ENCODE measurements at regions of chr2 and their contacts with region 1.

Region 1: GRCh38 chr2:62456721-62457539 is 49.1 kb downstream of the TMEM17 start:
- DNase-seq: peak; percentile 95
- H3K4me3 ChIP-seq: peak overlapping the region; percentile 58 to 67
- H3K27ac ChIP-seq: peak overlapping the region; percentile 32 to 63; a peak in 2 of 4 replicates
- H3K4me1 ChIP-seq: peaks cover 0 to 12% of the 10 kb centered on the region in 2 experiments; a peak in 1 of 4 replicates
- H3K27me3 ChIP-seq: no peaks in the 10 kb centered on the region
- CTCF ChIP-seq: peak; percentile 83
- EP300 ChIP-seq: no peak; a peak in 1 of 4 replicates
- RAD21 ChIP-seq: peak; percentile 94

Region 2: DNA sequence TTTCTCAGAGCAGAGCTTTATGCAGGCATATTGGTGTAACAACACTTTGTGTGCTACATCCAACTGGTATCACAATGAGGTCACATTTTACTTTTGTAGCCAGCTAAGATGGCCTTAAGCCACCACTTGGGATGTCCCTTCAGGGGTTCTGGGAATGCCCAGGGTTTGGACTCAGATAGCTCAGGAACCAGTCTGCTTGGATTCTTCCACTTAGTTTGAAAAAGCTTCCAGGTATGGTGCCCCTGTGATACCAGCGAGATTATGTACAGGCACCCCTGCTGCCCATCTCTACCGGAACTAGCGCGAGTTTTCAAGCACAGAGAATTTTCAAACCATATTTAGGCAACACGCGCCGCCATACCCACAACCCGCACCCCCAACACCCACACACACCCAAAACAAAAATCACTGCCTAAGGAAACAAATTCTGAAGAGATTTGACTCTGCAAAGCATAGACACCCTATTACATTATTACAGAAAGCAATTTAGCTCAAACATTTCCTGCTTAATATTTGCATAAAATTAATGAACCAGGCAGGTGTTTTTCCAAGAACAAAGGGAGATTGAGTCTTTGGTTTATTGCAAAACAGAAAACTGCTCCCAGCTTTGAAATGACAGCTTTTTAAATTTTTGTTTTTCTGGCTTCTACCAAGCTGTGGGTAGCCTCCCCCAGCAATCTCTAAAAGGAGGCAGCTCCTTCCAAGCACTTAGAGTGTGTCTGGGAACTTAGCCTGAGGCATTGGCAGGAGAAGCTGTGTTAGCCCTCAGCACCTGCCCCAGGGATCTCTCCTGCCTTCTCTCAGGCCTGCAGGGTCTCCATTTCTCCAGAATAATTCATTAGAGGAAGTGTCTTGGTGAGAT is 202.6 kb before region 1 on chr2:
- CTCF ChIA-PET with region 1: no interaction called
- POLR2A ChIA-PET with region 1: no interaction called
- DNase-seq: no peak
- H3K4me3 ChIP-seq: no peak overlapping the region
- H3K27ac ChIP-seq: no peak overlapping the region
- H3K4me1 ChIP-seq: no peaks in the 10 kb centered on the region
- H3K27me3 ChIP-seq: no peaks in the 10 kb centered on the region
- CTCF ChIP-seq: no peak
- EP300 ChIP-seq: no peak
- RAD21 ChIP-seq: no peak

Region 3: GRCh38 chr2:62334440-62335058 is 122.4 kb before region 1 on chr2:
- CTCF ChIA-PET with region 1: no interaction called
- POLR2A ChIA-PET with region 1: no interaction called
- DNase-seq: no peak
- H3K4me3 ChIP-seq: no peak overlapping the region
- H3K27ac ChIP-seq: peak overlapping the region in 1 of 2 experiments; percentile 70; a peak in 2 of 4 replicates
- H3K4me1 ChIP-seq: peaks cover 0 to 20% of the 10 kb centered on the region in 2 experiments; a peak in 2 of 4 replicates
- H3K27me3 ChIP-seq: no peaks in the 10 kb centered on the region
- CTCF ChIP-seq: no peak
- EP300 ChIP-seq: no peak
- RAD21 ChIP-seq: no peak

Region 4: GRCh38 chr2:62391696-62392095 is 65.2 kb before region 1 on chr2:
- CTCF ChIA-PET with region 1: no interaction called
- POLR2A ChIA-PET with region 1: no interaction called
- DNase-seq: no peak
- H3K4me3 ChIP-seq: no peak overlapping the region
- H3K27ac ChIP-seq: no peak overlapping the region
- H3K4me1 ChIP-seq: no peaks in the 10 kb centered on the region
- H3K27me3 ChIP-seq: no peaks in the 10 kb centered on the region
- CTCF ChIP-seq: no peak
- EP300 ChIP-seq: no peak
- RAD21 ChIP-seq: no peak

Region 5: DNA sequence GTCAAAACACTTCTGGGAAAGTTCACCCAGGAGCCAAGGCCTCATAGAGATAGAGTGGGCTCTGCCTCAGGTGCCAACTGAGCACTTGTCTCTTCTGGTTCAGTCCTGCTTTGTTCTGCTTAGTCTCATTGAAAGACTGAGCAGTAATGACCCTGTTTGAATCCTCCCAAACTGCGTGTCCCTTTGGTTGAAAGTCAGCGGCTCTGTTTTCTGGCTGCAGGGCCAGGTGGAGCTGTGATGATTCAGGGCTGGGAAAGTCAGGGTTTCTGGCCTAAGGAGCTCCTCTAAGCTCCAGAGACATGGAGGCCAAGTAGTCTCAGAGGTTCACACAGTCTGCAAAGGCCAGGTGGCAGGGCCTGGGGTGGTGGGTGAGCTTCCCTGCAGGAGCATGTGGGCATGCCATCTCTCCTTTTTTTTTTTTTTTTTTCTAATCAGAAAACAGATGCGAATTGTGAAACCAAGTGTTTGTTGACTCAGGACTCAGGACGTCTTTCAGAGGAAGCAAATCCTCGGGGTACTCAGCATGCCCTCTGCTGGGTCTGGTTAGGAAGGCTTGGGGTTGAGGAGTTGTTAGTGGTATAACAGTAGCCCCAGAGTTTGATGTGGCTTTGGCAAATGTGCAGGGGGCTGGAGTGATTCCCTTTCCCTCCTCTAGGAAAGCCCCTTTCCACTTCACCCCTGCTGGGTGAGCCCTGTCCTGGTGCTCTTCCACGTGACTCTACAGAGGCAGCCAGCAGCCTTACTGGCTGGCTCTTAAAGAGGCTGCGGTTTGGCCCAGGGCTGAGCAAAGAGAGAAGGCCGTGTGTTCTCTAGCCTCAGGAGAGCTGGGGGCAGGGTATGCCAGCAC is 10.8 kb after region 1 on chr2:
- CTCF ChIA-PET with region 1: interaction called, 24 read pairs
- POLR2A ChIA-PET with region 1: no interaction called
- DNase-seq: no peak
- H3K4me3 ChIP-seq: no peak overlapping the region
- H3K27ac ChIP-seq: no peak overlapping the region
- H3K4me1 ChIP-seq: peaks cover 0 to 5% of the 10 kb centered on the region in 2 experiments; a peak in 1 of 4 replicates
- H3K27me3 ChIP-seq: no peaks in the 10 kb centered on the region
- CTCF ChIP-seq: no peak
- EP300 ChIP-seq: no peak
- RAD21 ChIP-seq: no peak

Region 6: GRCh38 chr2:62550461-62550860 is 93.5 kb after region 1 on chr2:
- CTCF ChIA-PET with region 1: no interaction called
- POLR2A ChIA-PET with region 1: no interaction called
- DNase-seq: no peak
- H3K4me3 ChIP-seq: no peak overlapping the region
- H3K27ac ChIP-seq: no peak overlapping the region
- H3K4me1 ChIP-seq: no peaks in the 10 kb centered on the region
- H3K27me3 ChIP-seq: no peaks in the 10 kb centered on the region
- CTCF ChIP-seq: no peak
- EP300 ChIP-seq: peak in 1 of 2 experiments; percentile 23; a peak in 1 of 4 replicates
- RAD21 ChIP-seq: no peak

Region 7: GRCh38 chr2:62663920-62664795 is 207.2 kb after region 1 on chr2:
- CTCF ChIA-PET with region 1: interaction called, 19 read pairs
- POLR2A ChIA-PET with region 1: no interaction called
- DNase-seq: no peak
- H3K4me3 ChIP-seq: no peak overlapping the region; a peak in 1 of 4 replicates
- H3K27ac ChIP-seq: peak overlapping the region; percentile 73 to 89; a peak in 3 of 4 replicates
- H3K4me1 ChIP-seq: peaks cover 26 to 27% of the 10 kb centered on the region in 2 experiments
- H3K27me3 ChIP-seq: no peaks in the 10 kb centered on the region
- CTCF ChIP-seq: no peak
- EP300 ChIP-seq: no peak
- RAD21 ChIP-seq: no peak

Region 8: DNA sequence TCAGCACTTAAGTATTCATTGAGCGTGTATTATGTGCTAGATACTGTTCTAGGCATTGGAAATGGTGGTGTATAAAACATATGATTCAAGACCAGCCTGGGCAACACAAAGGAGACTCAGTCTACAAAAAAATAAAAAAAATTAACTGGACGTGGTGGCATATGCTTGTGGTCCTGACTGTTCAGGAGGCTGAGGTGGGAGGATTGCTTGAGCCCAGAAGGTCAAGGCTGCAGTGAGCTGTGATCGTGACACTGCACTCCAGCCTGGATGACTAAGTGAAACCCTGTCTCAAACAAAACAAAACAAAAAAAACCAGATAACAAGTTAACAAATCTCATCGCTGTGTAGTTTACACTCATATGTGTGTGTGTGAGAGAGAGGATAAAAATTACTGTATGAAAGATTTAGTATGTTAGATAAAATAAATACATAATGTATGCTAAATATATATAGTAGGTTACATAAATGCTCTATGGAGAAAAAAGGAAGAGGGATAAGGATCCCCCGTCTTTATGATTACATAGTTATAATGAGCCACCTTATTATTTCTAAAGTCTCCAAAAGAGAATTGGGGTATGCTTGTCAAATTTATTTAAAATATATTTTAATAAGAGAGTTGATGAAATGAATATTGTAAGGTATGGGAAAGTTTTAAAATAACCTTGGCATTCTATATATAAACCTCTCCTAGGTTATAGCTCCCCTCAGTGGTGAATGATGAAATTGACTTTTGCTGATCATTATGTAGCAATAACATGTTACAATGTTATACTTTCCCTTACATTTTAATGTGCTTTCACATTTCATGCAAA is 317.8 kb after region 1 on chr2:
- CTCF ChIA-PET with region 1: interaction called, 304 read pairs
- POLR2A ChIA-PET with region 1: interaction called, 4 read pairs
- DNase-seq: peak; percentile 19
- H3K4me3 ChIP-seq: peak overlapping the region in 1 of 2 experiments; percentile 38; a peak in 1 of 4 replicates
- H3K27ac ChIP-seq: peak overlapping the region in 1 of 2 experiments; percentile 55; a peak in 3 of 4 replicates
- H3K4me1 ChIP-seq: no peaks in the 10 kb centered on the region
- H3K27me3 ChIP-seq: no peaks in the 10 kb centered on the region
- CTCF ChIP-seq: peak; percentile 86
- EP300 ChIP-seq: no peak
- RAD21 ChIP-seq: peak; percentile 88

Measured in SK-N-SH (cell line).